ENCODE measurements at regions of chr1 and their contacts with region 1.

Region 1: GRCh38 chr1:3012456-3013291 is 8.6 kb upstream of the ACTRT2 start:
- DNase-seq: peak in 1 of 2 donors; percentile 12
- ATAC-seq: peak in 1 of 2 donors; percentile 54
- H3K4me3 ChIP-seq: no peak overlapping the region
- H3K27ac ChIP-seq: no peak overlapping the region
- H3K4me1 ChIP-seq: no peaks in the 10 kb centered on the region
- H3K27me3 ChIP-seq: peaks cover 34 to 38% (median 36%) of the 10 kb centered on the region in 3 donors
- CTCF ChIP-seq: peak; percentile 12 to 88 (median 64)
- POLR2A ChIP-seq: no peak

Region 2: GRCh38 chr1:3283849-3284248 is 271.2 kb after region 1 on chr1:
- in situ Hi-C with region 1: loop called in 1 of 4 experiments (anchors 25 kb)
- intact Hi-C with region 1: loop called (anchors 1 kb)
- DNase-seq: no peak
- ATAC-seq: no peak
- H3K4me3 ChIP-seq: no peak overlapping the region
- H3K27ac ChIP-seq: no peak overlapping the region
- H3K4me1 ChIP-seq: no peaks in the 10 kb centered on the region
- H3K27me3 ChIP-seq: peaks cover 8 to 32% (median 26%) of the 10 kb centered on the region in 3 donors
- CTCF ChIP-seq: peak in 4 of 5 experiments; percentile 10 to 70 (median 56)
- POLR2A ChIP-seq: no peak

Region 3: DNA sequence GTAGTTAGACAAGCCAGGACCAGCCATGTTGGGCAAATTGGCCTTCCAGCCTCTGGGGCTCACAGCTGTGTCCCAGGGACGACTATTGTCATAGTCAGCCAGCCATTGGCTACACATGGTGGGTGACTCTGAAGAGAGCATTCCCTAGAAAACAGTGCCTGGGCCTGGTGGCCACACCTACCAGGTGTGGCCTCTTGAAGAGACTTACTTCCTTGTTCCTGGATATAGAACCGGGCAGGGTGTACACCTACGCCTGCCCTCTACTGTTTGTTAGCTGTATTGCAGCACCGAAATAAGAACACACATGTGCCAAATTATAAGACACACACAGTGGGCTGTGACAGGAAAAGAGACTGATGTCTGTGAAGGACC is 307.2 kb after region 1 on chr1:
- in situ Hi-C with region 1: loop called in 1 of 4 experiments (anchors 25 kb)
- intact Hi-C with region 1: no loop called
- DNase-seq: no peak
- ATAC-seq: peak in 1 of 2 donors; percentile 49
- H3K4me3 ChIP-seq: no peak overlapping the region
- H3K27ac ChIP-seq: no peak overlapping the region
- H3K4me1 ChIP-seq: no peaks in the 10 kb centered on the region
- H3K27me3 ChIP-seq: peaks cover 23 to 41% (median 31%) of the 10 kb centered on the region in 3 donors
- CTCF ChIP-seq: peak in 3 of 5 experiments; percentile 31 to 48 (median 40)
- POLR2A ChIP-seq: no peak

Region 4: GRCh38 chr1:3410142-3410925 is 397.7 kb after region 1 on chr1:
- in situ Hi-C with region 1: loop called in 2 of 4 experiments (anchors 25 kb)
- intact Hi-C with region 1: no loop called
- DNase-seq: no peak
- ATAC-seq: no peak
- H3K4me3 ChIP-seq: no peak overlapping the region
- H3K27ac ChIP-seq: no peak overlapping the region
- H3K4me1 ChIP-seq: no peaks in the 10 kb centered on the region
- H3K27me3 ChIP-seq: peaks cover 3 to 13% (median 5%) of the 10 kb centered on the region in 3 donors
- CTCF ChIP-seq: peak; percentile 18 to 56 (median 51)
- POLR2A ChIP-seq: no peak

Measured in gastrocnemius medialis (tissue), 4 donors.